Ascending aorta (tissue), 2 donors: ENCODE measurements at regions of chr14 and their contacts with region 1.

Region 1: DNA sequence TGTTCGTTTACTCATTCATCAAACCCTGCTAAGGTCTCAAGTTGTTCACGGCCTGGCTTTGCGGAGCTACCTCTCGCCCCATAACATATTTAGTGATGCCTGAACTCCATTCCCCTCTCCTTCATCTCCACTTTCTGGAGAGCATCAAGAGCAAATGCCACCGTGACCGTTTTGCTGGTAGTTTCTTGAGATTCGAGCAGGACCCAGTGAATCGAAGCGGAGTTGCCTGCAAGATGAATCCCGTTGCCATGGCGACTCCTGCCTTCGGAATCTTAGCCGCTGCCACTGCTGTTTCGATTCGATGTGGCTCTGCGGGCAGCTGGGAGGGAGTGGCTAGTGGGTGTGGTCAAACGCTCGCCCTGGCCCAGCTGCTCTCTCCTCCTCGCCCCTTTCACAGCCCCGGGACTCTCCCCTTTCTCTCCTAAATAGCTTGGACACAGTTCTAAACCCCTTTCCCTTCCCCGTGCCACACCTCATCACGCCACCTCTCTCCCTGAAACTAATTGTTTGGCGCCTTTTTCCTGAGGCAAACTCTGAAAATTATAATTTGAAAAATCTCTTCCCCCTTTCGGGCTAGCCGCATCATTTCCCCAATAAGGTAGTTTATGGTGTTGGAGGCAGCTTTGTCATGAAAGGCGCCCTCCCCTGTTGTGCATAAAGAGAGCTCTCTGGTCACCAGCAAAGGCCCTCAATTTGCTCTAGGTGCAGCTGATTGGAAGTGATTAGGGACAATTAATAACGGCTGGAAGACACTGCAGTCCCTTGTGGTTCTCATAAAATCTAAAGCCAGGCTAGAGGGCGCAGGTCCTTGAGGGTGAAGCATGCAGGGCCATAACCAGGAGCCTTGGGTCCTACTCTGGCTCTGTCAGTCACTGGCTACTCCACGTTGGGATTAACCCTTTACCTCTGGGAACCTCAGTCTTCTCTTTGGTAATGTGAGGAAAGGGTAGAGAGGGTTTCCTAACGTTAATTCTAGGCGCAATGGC is 1.6 kb downstream of the DAAM1 start:
- DNase-seq: peak; percentile 61 to 95
- H3K4me3 ChIP-seq: peak overlapping the region; percentile 64 to 79
- H3K27ac ChIP-seq: peak overlapping the region; percentile 96 to 97
- H3K4me1 ChIP-seq: peaks cover 5 to 20% of the 10 kb centered on the region in 2 donors
- H3K27me3 ChIP-seq: no peaks in the 10 kb centered on the region
- CTCF ChIP-seq: no peak

Region 2: GRCh38 chr14:58427281-58428117 is 762.6 kb before region 1 on chr14 and contains the starts of genes KIAA0586 and TIMM9:
- intact Hi-C with region 1: loop called (anchors 5 kb)
- DNase-seq: peak; percentile 88 to 98
- H3K4me3 ChIP-seq: peak within 1 kb of the TSS; percentile 66 to 94
- H3K27ac ChIP-seq: peak within 1 kb of the TSS; percentile 85 to 91
- H3K4me1 ChIP-seq: peaks cover 0 to 12% of the 10 kb centered on the region in 2 donors
- H3K27me3 ChIP-seq: no peaks in the 10 kb centered on the region
- CTCF ChIP-seq: no peak
- total RNA-seq, gene KIAA0586: 20.1 TPM
- total RNA-seq, gene TIMM9: 0.96 TPM

Region 3: DNA sequence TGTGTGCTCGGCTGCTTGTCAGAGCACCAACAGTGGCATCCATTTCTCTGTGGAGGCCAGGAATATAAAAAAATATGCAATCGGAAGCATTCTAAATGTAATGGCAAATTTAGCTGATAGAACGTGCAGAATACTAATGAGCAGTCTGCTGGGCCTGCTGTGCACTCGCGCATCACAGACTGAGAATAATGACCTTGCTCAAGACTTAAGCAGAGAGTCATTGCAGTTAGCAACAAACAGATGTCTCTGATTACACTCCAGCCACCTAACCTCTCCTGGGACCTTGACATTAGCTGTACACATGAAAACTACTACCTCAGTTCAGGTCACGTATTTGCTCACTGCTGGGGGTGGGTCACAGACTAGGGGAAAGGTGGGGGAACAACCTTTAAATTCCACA is 270.9 kb before region 1 on chr14:
- intact Hi-C with region 1: no loop called
- DNase-seq: no peak
- H3K4me3 ChIP-seq: no peak overlapping the region
- H3K27ac ChIP-seq: no peak overlapping the region
- H3K4me1 ChIP-seq: no peaks in the 10 kb centered on the region
- H3K27me3 ChIP-seq: no peaks in the 10 kb centered on the region
- CTCF ChIP-seq: no peak

Region 4: DNA sequence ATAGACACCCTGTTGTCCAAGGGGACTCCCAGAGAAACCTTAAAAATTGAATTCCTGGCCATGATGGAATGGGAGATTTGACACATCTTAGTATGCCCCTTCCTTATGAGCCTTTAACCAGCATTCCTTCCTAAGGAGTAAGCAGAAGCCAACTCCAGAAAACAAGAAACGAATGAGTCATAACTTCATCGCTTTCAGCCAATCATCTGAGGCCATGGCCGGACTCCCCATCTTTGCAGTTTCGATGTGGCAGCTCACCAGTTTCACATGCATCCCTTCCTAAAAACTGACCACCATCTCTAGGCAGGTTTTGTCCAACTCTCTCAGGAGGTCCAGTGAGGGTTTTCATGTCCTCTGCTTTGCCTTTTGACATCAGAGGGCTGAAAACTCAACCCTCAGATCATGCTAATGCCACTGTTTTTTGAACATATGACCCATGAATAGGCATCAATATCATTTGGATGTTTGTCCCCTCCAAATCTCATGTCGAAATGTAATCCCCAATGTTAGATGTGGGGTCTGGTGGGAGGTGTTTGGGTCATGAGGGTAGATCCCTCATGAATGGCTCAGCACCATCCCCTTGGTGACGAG is 18.2 kb after region 1 on chr14:
- intact Hi-C with region 1: loop called (anchors 2 kb)
- DNase-seq: peak in 1 of 2 donors; percentile 70
- H3K4me3 ChIP-seq: no peak overlapping the region
- H3K27ac ChIP-seq: peak overlapping the region in 1 of 2 donors; percentile 37
- H3K4me1 ChIP-seq: peaks cover 0 to 24% of the 10 kb centered on the region in 2 donors
- H3K27me3 ChIP-seq: no peaks in the 10 kb centered on the region
- CTCF ChIP-seq: no peak

Region 5: DNA sequence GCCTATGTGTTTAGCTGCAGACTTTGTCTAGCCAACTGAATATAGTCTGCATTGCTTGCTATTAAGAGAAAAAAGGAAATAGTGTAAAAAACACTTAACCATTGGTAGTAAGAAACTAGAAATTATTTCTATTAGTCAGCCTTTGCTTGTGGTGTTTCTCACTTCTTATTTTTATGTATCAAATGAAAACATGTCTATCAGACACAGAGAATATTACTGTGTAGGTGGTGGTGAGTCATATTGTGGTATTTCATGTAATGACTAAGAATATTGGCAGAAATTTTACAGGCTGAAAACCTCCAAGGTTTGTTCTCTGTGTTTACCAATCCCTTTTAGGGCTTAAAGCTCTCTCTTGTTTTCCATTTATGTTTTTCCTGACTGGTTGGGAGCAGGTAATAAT is 85.6 kb after region 1 on chr14:
- intact Hi-C with region 1: loop called (anchors 5 kb)
- DNase-seq: no peak
- H3K4me3 ChIP-seq: no peak overlapping the region
- H3K27ac ChIP-seq: peak overlapping the region; percentile 76 to 82
- H3K4me1 ChIP-seq: peaks cover 13 to 47% of the 10 kb centered on the region in 2 donors
- H3K27me3 ChIP-seq: no peaks in the 10 kb centered on the region
- CTCF ChIP-seq: no peak

Region 6: DNA sequence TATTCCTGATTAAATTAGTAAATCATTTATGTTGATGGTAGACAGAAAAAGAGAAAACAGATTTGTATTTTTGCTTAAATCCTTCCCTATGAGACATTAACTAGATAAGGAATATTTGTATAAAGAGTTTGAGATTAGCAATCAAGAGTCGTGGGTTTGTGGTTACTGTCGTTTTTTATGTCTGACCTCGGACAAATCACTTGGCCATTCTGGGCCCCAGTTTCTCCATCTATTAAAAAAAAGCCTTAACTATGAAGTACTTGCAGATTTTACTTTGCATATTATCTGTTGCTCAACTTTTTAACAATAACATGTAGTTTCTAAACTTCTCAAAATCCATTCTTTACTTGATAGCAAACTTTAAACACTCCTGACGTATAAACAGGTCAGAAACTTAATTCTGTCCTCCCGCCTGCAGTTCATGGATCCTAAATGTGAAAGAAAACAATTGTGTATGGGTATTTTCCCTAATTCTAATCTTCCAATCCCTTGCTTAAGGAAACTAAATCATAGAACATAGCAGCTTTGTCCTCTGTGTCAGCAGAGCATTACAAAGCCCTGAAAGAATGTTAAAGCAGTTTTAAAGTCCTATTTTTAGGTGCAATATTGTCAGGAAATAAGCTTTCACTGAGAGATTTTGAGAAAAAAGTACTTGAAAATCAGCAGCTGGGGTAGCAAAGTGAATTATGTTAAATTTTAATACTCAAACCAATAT is 156.9 kb after region 1 on chr14:
- intact Hi-C with region 1: loop called (anchors 5 kb)
- DNase-seq: no peak
- H3K4me3 ChIP-seq: no peak overlapping the region
- H3K27ac ChIP-seq: peak overlapping the region; percentile 85 to 88
- H3K4me1 ChIP-seq: peaks cover 0 to 68% of the 10 kb centered on the region in 2 donors
- H3K27me3 ChIP-seq: no peaks in the 10 kb centered on the region
- CTCF ChIP-seq: no peak

Region 7: DNA sequence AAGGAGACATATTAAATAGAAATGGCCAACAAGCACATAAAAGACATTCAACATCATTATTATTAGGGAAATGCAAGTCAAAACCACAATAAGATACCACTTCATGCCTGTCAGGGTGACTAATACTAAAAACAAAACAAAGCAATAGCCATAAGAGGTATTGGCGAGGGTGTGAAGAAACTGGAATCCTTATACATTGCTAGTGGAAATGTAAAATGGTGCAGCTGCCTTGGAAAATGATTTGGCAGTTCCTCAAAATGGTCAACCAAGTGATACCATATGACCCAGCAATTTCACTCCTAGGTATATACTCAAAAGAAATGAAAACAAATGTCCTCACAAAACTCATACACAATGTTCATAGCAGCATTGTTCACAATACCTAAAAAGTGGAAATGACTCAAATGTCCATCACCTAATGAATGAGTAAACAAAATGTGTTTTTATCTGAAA is 248.1 kb after region 1 on chr14:
- intact Hi-C with region 1: loop called (anchors 2 kb)
- DNase-seq: no peak
- H3K4me3 ChIP-seq: no peak overlapping the region
- H3K27ac ChIP-seq: peak overlapping the region; percentile 41 to 69
- H3K4me1 ChIP-seq: peaks cover 2 to 36% of the 10 kb centered on the region in 2 donors
- H3K27me3 ChIP-seq: no peaks in the 10 kb centered on the region
- CTCF ChIP-seq: no peak